ENCODE measurements at regions of chr20 and their contacts with region 1.

Region 1: DNA sequence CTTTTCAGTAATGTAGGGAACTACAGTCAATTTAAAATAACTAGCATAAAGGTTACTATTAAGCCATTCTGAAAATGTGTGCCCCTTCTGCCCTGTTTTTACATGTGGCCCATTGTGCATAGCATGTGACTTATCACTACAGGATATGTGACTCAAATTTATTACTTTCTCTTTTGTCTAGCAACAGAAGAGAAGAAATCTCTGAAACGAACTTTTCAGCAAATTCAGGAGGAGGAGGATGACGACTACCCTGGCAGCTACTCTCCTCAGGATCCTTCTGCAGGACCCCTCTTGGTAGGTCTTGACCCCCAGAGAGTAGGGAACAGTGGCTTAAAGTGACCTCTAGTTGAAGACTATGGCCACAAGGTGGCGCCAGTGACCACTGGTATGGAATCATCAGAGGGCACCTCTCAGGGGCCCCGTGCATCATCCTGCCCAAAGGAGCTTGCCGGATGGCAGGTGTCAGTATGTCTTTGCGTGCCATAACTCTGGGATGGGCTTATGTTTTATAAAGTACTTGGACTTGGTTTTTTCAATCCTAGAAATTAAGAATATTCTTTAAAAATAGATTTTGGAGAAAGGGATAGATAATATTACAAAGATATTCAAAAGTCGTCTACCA is 23.9 kb downstream of the RPRD1B start:
- DNase-seq: peak; percentile 91
- H3K4me3 Mint-ChIP-seq: no peak overlapping the region
- H3K27ac Mint-ChIP-seq: no peak overlapping the region
- H3K4me1 Mint-ChIP-seq: no peaks in the 10 kb centered on the region
- H3K27me3 Mint-ChIP-seq: no peaks in the 10 kb centered on the region
- CTCF ChIP-seq: peak; percentile 97

Region 2: GRCh38 chr20:37986873-37987601 is 70.4 kb before region 1 on chr20:
- CTCF ChIA-PET with region 1: no interaction called
- intact Hi-C with region 1: no loop called
- DNase-seq: peak; percentile 37
- H3K4me3 Mint-ChIP-seq: no peak overlapping the region
- H3K27ac Mint-ChIP-seq: no peak overlapping the region
- H3K4me1 Mint-ChIP-seq: peaks cover 44% of the 10 kb centered on the region
- H3K27me3 Mint-ChIP-seq: no peaks in the 10 kb centered on the region
- CTCF ChIP-seq: no peak

Region 3: GRCh38 chr20:38023181-38024001 is 34.1 kb before region 1 on chr20:
- CTCF ChIA-PET with region 1: no interaction called
- intact Hi-C with region 1: no loop called
- DNase-seq: no peak
- H3K4me3 Mint-ChIP-seq: no peak overlapping the region
- H3K27ac Mint-ChIP-seq: no peak overlapping the region
- H3K4me1 Mint-ChIP-seq: peaks cover 36% of the 10 kb centered on the region
- H3K27me3 Mint-ChIP-seq: no peaks in the 10 kb centered on the region
- CTCF ChIP-seq: no peak

Region 4: GRCh38 chr20:38321959-38322598 is 264.6 kb after region 1 on chr20:
- CTCF ChIA-PET with region 1: interaction called, 17 read pairs
- intact Hi-C with region 1: no loop called
- DNase-seq: peak; percentile 76
- H3K4me3 Mint-ChIP-seq: no peak overlapping the region
- H3K27ac Mint-ChIP-seq: no peak overlapping the region
- H3K4me1 Mint-ChIP-seq: peaks cover 17% of the 10 kb centered on the region
- H3K27me3 Mint-ChIP-seq: peaks cover 75% of the 10 kb centered on the region
- CTCF ChIP-seq: peak; percentile 71